ENCODE measurements at regions of chr12 and their contacts with region 1.

Region 1: GRCh38 chr12:75944097-75944904 is 87.3 kb downstream of the PHLDA1 start:
- DNase-seq: peak in 1 of 2 experiments; percentile 53
- H3K4me3 ChIP-seq: no peak overlapping the region
- H3K4me3 Mint-ChIP-seq: peak overlapping the region; percentile 57
- H3K27ac Mint-ChIP-seq: peak overlapping the region; percentile 33
- H3K4me1 ChIP-seq: peaks cover 45% of the 10 kb centered on the region
- H3K4me1 Mint-ChIP-seq: peaks cover 22% of the 10 kb centered on the region
- H3K27me3 ChIP-seq: no peaks in the 10 kb centered on the region
- H3K27me3 Mint-ChIP-seq: no peaks in the 10 kb centered on the region
- CTCF ChIP-seq: no peak

Region 2: GRCh38 chr12:75579552-75579951 is 364.7 kb before region 1 on chr12:
- CTCF ChIA-PET with region 1: no interaction called
- POLR2A ChIA-PET with region 1: no interaction called
- intact Hi-C with region 1: no loop called
- DNase-seq: no peak
- H3K4me3 ChIP-seq: no peak overlapping the region
- H3K4me3 Mint-ChIP-seq: no peak overlapping the region
- H3K27ac Mint-ChIP-seq: no peak overlapping the region
- H3K4me1 ChIP-seq: peaks cover 5% of the 10 kb centered on the region; the same call in 1 of the 2 replicates
- H3K4me1 Mint-ChIP-seq: peaks cover 7% of the 10 kb centered on the region
- H3K27me3 ChIP-seq: no peaks in the 10 kb centered on the region
- H3K27me3 Mint-ChIP-seq: no peaks in the 10 kb centered on the region
- CTCF ChIP-seq: no peak

Region 3: DNA sequence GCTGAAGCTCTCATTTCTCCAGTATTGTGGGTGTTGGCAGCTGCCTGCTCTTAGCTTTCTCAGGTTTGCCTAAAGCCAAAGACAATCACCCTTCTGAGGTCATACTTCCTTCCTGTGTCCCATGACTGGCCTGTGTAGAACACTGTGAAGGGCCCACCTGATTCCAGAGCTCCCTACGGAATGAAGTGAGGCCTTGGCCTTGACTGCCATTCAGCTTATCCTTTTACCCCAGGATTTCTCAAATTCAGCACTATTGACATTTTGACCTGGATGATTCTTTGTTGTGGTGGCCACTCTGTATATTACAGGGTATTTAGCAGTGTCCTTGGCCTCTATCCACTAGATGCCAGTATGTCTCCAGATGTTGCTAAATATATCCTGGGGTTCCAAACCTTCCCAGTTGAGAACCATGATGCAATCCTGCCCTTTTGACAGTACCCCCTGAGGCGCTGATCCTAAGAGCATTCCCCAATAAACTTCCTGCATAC is 320.6 kb before region 1 on chr12:
- CTCF ChIA-PET with region 1: no interaction called
- POLR2A ChIA-PET with region 1: no interaction called
- intact Hi-C with region 1: loop called (anchors 2 kb)
- DNase-seq: peak; percentile 46 to 50
- H3K4me3 ChIP-seq: no peak overlapping the region
- H3K4me3 Mint-ChIP-seq: no peak overlapping the region
- H3K27ac Mint-ChIP-seq: peak overlapping the region; percentile 76
- H3K4me1 ChIP-seq: peaks cover 17% of the 10 kb centered on the region
- H3K4me1 Mint-ChIP-seq: peaks cover 20% of the 10 kb centered on the region
- H3K27me3 ChIP-seq: no peaks in the 10 kb centered on the region
- H3K27me3 Mint-ChIP-seq: no peaks in the 10 kb centered on the region
- CTCF ChIP-seq: peak; percentile 20 to 51

Region 4: DNA sequence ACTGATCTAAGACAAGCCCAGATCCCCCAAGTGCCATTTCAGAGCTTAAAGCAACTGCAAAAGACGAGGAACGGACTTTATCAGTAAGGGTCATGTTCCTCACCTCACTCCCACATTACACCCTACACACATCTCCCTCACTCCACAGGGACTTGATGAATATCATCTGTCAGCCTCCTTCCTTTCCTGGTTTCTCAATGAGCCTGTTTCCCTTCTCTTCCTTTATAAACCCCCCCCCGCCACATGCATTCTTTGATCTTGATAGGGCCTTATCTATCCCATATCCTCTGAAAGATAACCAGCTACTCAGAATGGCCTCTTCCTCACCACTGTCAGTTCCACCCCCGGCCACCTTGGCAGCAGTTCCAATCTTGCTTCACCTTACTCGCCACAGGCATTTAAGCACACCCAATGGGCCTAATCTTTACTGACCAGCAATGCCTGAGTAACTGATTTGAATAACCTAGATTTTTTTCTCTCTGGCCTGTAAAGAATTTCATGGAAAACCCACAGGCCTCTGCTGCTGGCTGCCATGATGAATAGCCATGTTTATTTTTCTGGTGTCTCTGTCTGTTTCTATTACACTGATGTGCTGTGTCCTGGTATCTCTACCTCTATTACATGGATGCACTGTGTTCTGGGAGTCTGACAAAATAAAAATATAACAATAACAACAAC is 51.4 kb before region 1 on chr12:
- CTCF ChIA-PET with region 1: no interaction called
- POLR2A ChIA-PET with region 1: no interaction called
- intact Hi-C with region 1: loop called (anchors 2 kb)
- DNase-seq: peak; percentile 75 to 91
- H3K4me3 ChIP-seq: no peak overlapping the region
- H3K4me3 Mint-ChIP-seq: peak overlapping the region; percentile 0
- H3K27ac Mint-ChIP-seq: peak overlapping the region; percentile 74
- H3K4me1 ChIP-seq: peaks cover 30% of the 10 kb centered on the region
- H3K4me1 Mint-ChIP-seq: peaks cover 33% of the 10 kb centered on the region
- H3K27me3 ChIP-seq: no peaks in the 10 kb centered on the region
- H3K27me3 Mint-ChIP-seq: no peaks in the 10 kb centered on the region
- CTCF ChIP-seq: no peak

Region 5: DNA sequence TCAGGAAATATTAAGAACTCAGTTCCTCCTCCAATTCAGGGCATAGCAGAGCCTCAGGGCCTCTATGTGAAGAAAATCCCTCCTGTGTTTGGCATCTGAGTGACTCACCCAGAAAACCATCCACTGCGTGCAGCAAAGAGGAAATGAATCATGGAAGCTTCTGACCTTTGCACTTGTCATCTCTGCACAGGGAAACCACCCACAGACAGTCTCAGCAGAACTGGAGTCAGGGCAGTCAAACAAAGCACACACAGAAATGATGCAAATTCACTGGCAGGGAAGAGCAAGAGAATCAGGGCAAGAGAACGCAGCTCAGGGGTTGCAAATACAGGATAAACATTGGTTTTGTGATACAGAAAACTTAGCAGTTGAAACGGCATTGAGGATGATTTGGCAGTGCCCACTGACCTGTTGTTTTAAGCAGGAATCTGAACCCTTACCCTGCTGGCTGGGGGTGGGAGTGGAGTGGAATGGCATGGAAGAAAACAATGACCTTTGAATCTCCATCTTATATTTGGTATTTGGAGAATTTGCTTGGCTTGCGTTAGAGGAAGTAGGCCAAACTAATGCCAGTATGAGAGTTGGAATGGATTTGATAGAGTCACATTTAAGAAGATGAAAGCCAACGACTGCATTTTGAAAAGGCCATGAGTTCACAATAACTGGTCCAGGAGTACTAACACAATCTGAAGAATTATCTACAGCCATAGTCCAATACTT is 33.8 kb after region 1 on chr12:
- CTCF ChIA-PET with region 1: no interaction called
- POLR2A ChIA-PET with region 1: no interaction called
- intact Hi-C with region 1: loop called (anchors 1 kb)
- DNase-seq: peak; percentile 91 to 94
- H3K4me3 ChIP-seq: no peak overlapping the region
- H3K4me3 Mint-ChIP-seq: peak overlapping the region; percentile 63
- H3K27ac Mint-ChIP-seq: peak overlapping the region; percentile 92
- H3K4me1 ChIP-seq: peaks cover 68% of the 10 kb centered on the region
- H3K4me1 Mint-ChIP-seq: peaks cover 46% of the 10 kb centered on the region
- H3K27me3 ChIP-seq: no peaks in the 10 kb centered on the region
- H3K27me3 Mint-ChIP-seq: no peaks in the 10 kb centered on the region
- CTCF ChIP-seq: no peak

Region 6: GRCh38 chr12:76083904-76084862 is 139.9 kb after region 1 on chr12 and contains the start of gene NAP1L1:
- CTCF ChIA-PET with region 1: no interaction called
- POLR2A ChIA-PET with region 1: no interaction called
- intact Hi-C with region 1: no loop called
- DNase-seq: peak; percentile 96 to 98
- H3K4me3 ChIP-seq: peak within 1 kb of the TSS; percentile 78
- H3K4me3 Mint-ChIP-seq: peak within 1 kb of the TSS; percentile 96
- H3K27ac Mint-ChIP-seq: peak within 1 kb of the TSS; percentile 99
- H3K4me1 ChIP-seq: peaks cover 15% of the 10 kb centered on the region
- H3K4me1 Mint-ChIP-seq: peaks cover 26% of the 10 kb centered on the region
- H3K27me3 ChIP-seq: no peaks in the 10 kb centered on the region
- H3K27me3 Mint-ChIP-seq: no peaks in the 10 kb centered on the region
- CTCF ChIP-seq: peak in 1 of 2 experiments; percentile 5
- total RNA-seq, gene NAP1L1: 696 and 711 TPM in 2 replicates

Region 7: GRCh38 chr12:76096079-76096646 is 151.9 kb after region 1 on chr12:
- CTCF ChIA-PET with region 1: no interaction called
- POLR2A ChIA-PET with region 1: no interaction called
- intact Hi-C with region 1: no loop called
- DNase-seq: no peak
- H3K4me3 ChIP-seq: no peak overlapping the region
- H3K4me3 Mint-ChIP-seq: no peak overlapping the region
- H3K27ac Mint-ChIP-seq: no peak overlapping the region
- H3K4me1 ChIP-seq: no peaks in the 10 kb centered on the region
- H3K4me1 Mint-ChIP-seq: no peaks in the 10 kb centered on the region
- H3K27me3 ChIP-seq: no peaks in the 10 kb centered on the region
- H3K27me3 Mint-ChIP-seq: no peaks in the 10 kb centered on the region
- CTCF ChIP-seq: no peak

Measured in Caco-2 (cell line).